Caco-2 (cell line): ENCODE measurements at regions of chr4 and their contacts with region 1.

Region 1: GRCh38 chr4:37157476-37158167 is 86.9 kb upstream of the NWD2 start:
- DNase-seq: peak in 1 of 2 experiments; percentile 20
- H3K4me3 ChIP-seq: no peak overlapping the region
- H3K4me3 Mint-ChIP-seq: no peak overlapping the region
- H3K27ac Mint-ChIP-seq: no peak overlapping the region
- H3K4me1 ChIP-seq: peaks cover 12% of the 10 kb centered on the region
- H3K4me1 Mint-ChIP-seq: no peaks in the 10 kb centered on the region
- H3K27me3 ChIP-seq: no peaks in the 10 kb centered on the region
- H3K27me3 Mint-ChIP-seq: peaks cover 9% of the 10 kb centered on the region
- CTCF ChIP-seq: no peak

Region 2: GRCh38 chr4:37109756-37110155 is 47.9 kb before region 1 on chr4:
- CTCF ChIA-PET with region 1: no interaction called
- POLR2A ChIA-PET with region 1: no interaction called
- intact Hi-C with region 1: no loop called
- DNase-seq: no peak
- H3K4me3 ChIP-seq: no peak overlapping the region
- H3K4me3 Mint-ChIP-seq: no peak overlapping the region
- H3K27ac Mint-ChIP-seq: no peak overlapping the region
- H3K4me1 ChIP-seq: no peaks in the 10 kb centered on the region
- H3K4me1 Mint-ChIP-seq: no peaks in the 10 kb centered on the region
- H3K27me3 ChIP-seq: no peaks in the 10 kb centered on the region
- H3K27me3 Mint-ChIP-seq: peaks cover 9% of the 10 kb centered on the region
- CTCF ChIP-seq: no peak

Region 3: GRCh38 chr4:37139982-37140381 is 17.6 kb before region 1 on chr4:
- CTCF ChIA-PET with region 1: interaction called, 4 read pairs
- POLR2A ChIA-PET with region 1: no interaction called
- intact Hi-C with region 1: loop called (anchors 1 kb)
- DNase-seq: peak in 1 of 2 experiments; percentile 19
- H3K4me3 ChIP-seq: no peak overlapping the region
- H3K4me3 Mint-ChIP-seq: no peak overlapping the region
- H3K27ac Mint-ChIP-seq: no peak overlapping the region
- H3K4me1 ChIP-seq: no peaks in the 10 kb centered on the region
- H3K4me1 Mint-ChIP-seq: peaks cover 8% of the 10 kb centered on the region
- H3K27me3 ChIP-seq: no peaks in the 10 kb centered on the region
- H3K27me3 Mint-ChIP-seq: no peaks in the 10 kb centered on the region
- CTCF ChIP-seq: no peak

Region 4: DNA sequence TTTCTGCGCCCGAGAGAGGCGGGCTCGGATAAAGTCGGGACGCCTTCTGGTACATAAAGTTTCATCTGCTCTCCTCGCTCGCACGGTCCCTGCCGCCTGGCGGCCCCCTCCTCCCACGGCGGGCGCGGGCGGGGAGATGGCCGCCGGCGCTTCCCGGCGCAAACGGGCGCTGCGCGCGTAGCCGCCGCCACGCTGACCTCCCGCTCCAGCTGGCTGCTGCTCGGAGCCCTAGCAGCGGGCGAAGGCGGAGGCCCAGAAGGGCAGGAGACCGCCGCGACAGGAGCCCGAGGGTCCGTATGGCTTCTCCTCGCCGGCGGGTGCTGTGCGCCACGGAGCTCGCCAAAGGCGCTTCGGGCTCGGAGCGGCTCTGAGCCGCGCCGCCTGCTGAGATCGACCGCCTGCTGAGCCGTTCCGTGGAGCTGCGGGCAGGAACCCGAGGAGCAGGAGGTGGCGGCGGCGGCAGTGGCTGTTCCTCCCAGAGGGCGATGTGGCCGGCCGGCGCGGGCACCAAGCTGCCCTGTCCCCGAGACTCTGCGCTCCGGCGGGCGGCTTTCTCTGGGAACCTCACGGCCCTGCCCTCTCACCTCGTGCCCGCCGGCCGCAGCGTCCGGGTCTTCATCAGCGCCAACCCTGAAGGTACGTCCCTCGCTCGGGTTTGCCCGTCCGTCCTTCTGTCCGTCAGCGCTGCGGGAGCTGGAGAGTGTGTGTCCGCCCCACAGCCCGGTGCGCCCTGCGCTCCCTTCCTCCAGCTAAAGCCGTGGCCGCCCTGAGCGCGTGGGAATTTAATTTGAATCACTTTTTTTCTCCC is 87.2 kb after region 1 on chr4 and contains the start of gene NWD2:
- CTCF ChIA-PET with region 1: no interaction called
- POLR2A ChIA-PET with region 1: no interaction called
- intact Hi-C with region 1: no loop called
- DNase-seq: peak in 1 of 2 experiments; percentile 35
- H3K4me3 ChIP-seq: 0 out of 2 replicates have a peak within 1 kb of the TSS, but pooled peaks have one; percentile 23
- H3K4me3 Mint-ChIP-seq: peak within 1 kb of the TSS; percentile 63
- H3K27ac Mint-ChIP-seq: no peak within 1 kb of the TSS
- H3K4me1 ChIP-seq: no peaks in the 10 kb centered on the region
- H3K4me1 Mint-ChIP-seq: no peaks in the 10 kb centered on the region
- H3K27me3 ChIP-seq: no peaks in the 10 kb centered on the region; the same call in 1 of the 2 replicates
- H3K27me3 Mint-ChIP-seq: peaks cover 30% of the 10 kb centered on the region
- CTCF ChIP-seq: no peak
- total RNA-seq, gene NWD2: not detected in 2 replicates

Region 5: GRCh38 chr4:37389967-37390580 is 232.5 kb after region 1 on chr4:
- CTCF ChIA-PET with region 1: no interaction called
- POLR2A ChIA-PET with region 1: no interaction called
- intact Hi-C with region 1: loop called (anchors 10 kb)
- DNase-seq: peak in 1 of 2 experiments; percentile 61
- H3K4me3 ChIP-seq: no peak overlapping the region
- H3K4me3 Mint-ChIP-seq: no peak overlapping the region
- H3K27ac Mint-ChIP-seq: no peak overlapping the region
- H3K4me1 ChIP-seq: peaks cover 12% of the 10 kb centered on the region; the same call in 1 of the 2 replicates
- H3K4me1 Mint-ChIP-seq: peaks cover 11% of the 10 kb centered on the region
- H3K27me3 ChIP-seq: no peaks in the 10 kb centered on the region
- H3K27me3 Mint-ChIP-seq: peaks cover 3% of the 10 kb centered on the region
- CTCF ChIP-seq: peak; percentile 57 to 70